Calu3 (cell line): ENCODE measurements at regions of chr11 and their contacts with region 1.

Region 1: GRCh38 chr11:100827934-100828661 is 141.0 kb downstream of the ARHGAP42 start:
- DNase-seq: peak; percentile 68
- H3K4me3 Mint-ChIP-seq: no peak overlapping the region
- H3K27ac Mint-ChIP-seq: peak overlapping the region; percentile 83
- H3K4me1 Mint-ChIP-seq: peaks cover 26% of the 10 kb centered on the region
- H3K27me3 Mint-ChIP-seq: no peaks in the 10 kb centered on the region
- CTCF ChIP-seq: no peak

Region 2: GRCh38 chr11:100501450-100501849 is 326.6 kb before region 1 on chr11:
- CTCF ChIA-PET with region 1: no interaction called
- intact Hi-C with region 1: no loop called
- DNase-seq: no peak
- H3K4me3 Mint-ChIP-seq: no peak overlapping the region
- H3K27ac Mint-ChIP-seq: no peak overlapping the region
- H3K4me1 Mint-ChIP-seq: no peaks in the 10 kb centered on the region
- H3K27me3 Mint-ChIP-seq: no peaks in the 10 kb centered on the region
- CTCF ChIP-seq: no peak

Region 3: GRCh38 chr11:100687630-100688395 is 140.3 kb before region 1 on chr11:
- CTCF ChIA-PET with region 1: interaction called, 23 read pairs
- intact Hi-C with region 1: loop called (anchors 1 kb)
- DNase-seq: peak; percentile 51
- H3K4me3 Mint-ChIP-seq: peak overlapping the region; percentile 90
- H3K27ac Mint-ChIP-seq: peak overlapping the region; percentile 85
- H3K4me1 Mint-ChIP-seq: peaks cover 29% of the 10 kb centered on the region
- H3K27me3 Mint-ChIP-seq: no peaks in the 10 kb centered on the region
- CTCF ChIP-seq: no peak

Region 4: GRCh38 chr11:100849009-100849900 is 21.2 kb after region 1 on chr11:
- CTCF ChIA-PET with region 1: interaction called, 6 read pairs
- intact Hi-C with region 1: loop called (anchors 2 kb)
- DNase-seq: no peak
- H3K4me3 Mint-ChIP-seq: peak overlapping the region; percentile 7
- H3K27ac Mint-ChIP-seq: peak overlapping the region; percentile 60
- H3K4me1 Mint-ChIP-seq: peaks cover 26% of the 10 kb centered on the region
- H3K27me3 Mint-ChIP-seq: no peaks in the 10 kb centered on the region
- CTCF ChIP-seq: no peak